Calu3 (cell line): ENCODE measurements at regions of chr10 and their contacts with region 1.

Region 1: DNA sequence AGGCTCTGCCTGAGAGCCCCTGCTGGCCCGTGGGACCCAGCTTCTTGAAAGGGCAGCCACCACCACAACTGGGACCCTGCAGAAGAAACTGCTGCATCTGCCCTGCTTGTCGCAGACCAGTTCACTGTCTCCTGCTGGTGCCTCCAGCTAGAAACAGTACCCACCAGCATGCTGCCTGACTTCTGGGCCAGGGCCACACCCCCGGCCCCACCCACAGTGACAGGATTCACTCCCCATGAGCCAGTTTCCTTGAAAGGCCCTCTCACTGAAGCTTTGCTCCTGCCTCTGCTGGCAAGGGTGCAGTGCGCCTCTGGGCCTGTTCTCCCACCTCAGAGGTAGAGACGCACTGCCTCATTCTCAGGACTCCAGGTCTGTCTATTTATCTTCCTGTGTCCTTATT is 32.4 kb downstream of the ANXA11 start:
- DNase-seq: peak; percentile 51
- H3K4me3 Mint-ChIP-seq: no peak overlapping the region
- H3K27ac Mint-ChIP-seq: peak overlapping the region; percentile 53
- H3K4me1 Mint-ChIP-seq: peaks cover 84% of the 10 kb centered on the region
- H3K27me3 Mint-ChIP-seq: no peaks in the 10 kb centered on the region
- CTCF ChIP-seq: no peak

Region 2: DNA sequence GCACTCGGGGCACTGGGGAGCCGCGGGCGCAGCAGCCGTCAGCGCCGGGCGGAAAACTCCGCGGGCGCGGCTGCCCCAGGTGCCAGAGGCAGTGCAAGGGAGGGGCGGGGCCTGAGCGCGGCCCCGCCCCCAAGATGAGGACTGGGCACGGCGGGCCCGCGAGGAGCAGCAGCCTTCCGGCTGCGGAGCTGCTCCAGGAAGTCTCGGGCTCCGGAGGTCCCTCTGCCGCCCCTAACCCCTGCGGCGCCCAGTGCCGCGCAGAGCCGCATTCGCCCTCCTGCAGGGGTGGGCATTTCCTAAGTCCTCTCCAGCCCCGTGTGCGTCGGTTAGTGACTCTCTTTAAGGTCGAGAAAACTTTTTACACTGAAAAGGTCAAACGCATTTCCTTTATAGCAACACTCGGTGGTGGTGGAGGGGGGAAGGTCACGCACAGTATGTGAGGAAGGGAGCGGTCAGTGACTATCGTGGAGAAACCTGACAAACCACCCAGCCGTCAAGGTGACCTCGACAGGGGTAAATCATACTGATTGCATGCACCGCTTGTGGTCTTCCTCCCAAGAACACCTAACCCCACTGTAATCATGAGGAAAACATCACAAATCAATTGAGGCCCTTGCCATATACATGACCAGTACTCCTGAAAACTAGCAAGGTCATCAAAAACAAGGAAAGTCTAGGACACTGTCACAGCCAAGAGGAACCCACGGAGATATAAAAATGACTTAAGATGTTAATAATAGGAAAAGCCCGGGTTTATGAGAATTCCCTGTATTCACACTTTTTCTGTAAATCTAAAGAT is 32.8 kb after region 1 on chr10 and contains the start of gene ANXA11:
- CTCF ChIA-PET with region 1: no interaction called
- intact Hi-C with region 1: loop called (anchors 5 kb)
- DNase-seq: peak; percentile 92
- H3K4me3 Mint-ChIP-seq: peak within 1 kb of the TSS; percentile 86
- H3K27ac Mint-ChIP-seq: peak within 1 kb of the TSS; percentile 94
- H3K4me1 Mint-ChIP-seq: peaks cover 66% of the 10 kb centered on the region
- H3K27me3 Mint-ChIP-seq: no peaks in the 10 kb centered on the region
- CTCF ChIP-seq: no peak
- total RNA-seq, gene ANXA11: 835 and 846 TPM in 2 replicates

Region 3: DNA sequence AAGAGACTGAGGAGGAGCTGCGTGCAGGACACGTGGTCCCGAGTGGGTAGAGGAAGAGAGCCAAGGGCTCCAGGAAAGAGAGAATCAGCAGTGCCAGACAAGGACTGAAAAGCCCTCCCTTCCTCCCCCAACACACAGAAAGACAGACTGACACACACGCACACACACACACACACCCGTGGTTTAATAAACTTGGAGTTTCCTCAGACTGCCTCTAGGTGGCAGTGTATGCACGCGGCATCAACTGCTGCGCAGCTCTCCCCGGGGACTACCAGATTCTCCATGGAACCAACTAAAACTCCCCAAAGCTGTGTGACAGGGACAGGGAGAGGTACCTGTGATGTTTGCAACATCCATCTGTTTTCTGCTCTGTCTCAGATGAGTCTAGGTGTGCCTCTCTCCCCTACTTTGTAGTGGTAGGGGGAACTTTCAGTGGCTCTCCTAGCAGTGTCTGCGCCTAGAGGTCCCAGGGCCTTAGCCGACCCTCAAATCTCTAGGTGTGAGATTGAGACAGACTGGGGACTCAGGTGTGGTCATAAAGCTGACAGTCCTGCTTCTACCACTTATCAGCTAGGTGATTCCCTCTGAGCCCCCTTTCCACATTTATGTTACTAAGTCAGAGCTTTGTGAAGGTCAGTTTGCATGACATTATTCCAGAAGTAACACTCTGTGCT is 271.9 kb after region 1 on chr10:
- CTCF ChIA-PET with region 1: no interaction called
- intact Hi-C with region 1: no loop called
- DNase-seq: peak; percentile 66
- H3K4me3 Mint-ChIP-seq: no peak overlapping the region
- H3K27ac Mint-ChIP-seq: no peak overlapping the region
- H3K4me1 Mint-ChIP-seq: peaks cover 31% of the 10 kb centered on the region
- H3K27me3 Mint-ChIP-seq: peaks cover 20% of the 10 kb centered on the region
- CTCF ChIP-seq: peak; percentile 73